GM12878 (cell line): ENCODE measurements at regions of chr1 and their contacts with region 1.

Region 1: DNA sequence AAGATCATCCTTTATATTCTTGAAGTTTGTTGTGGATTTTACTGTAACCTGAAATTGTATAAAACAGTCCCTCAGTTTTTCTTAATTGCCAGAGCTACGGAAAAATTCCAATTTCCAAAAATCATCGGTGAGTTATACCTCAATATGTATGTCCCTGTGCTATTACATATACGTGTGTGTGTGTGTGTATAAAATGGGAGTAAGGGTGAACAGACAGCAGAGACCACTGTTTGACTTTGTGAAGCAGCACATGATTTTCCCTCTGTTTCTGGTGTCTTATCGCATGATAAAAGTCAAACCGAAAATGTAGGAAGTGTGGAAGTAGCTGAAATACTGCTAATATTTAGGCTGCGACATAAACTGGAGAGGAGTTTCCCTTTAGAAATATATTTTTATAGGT is 1.2 kb downstream of the OR2T1 start:
- DNase-seq: peak; percentile 76
- ATAC-seq: no peak
- H3K4me3 ChIP-seq: no peak overlapping the region
- H3K27ac ChIP-seq: no peak overlapping the region
- H3K4me1 ChIP-seq: peaks cover 8% of the 10 kb centered on the region
- H3K27me3 ChIP-seq: no peaks in the 10 kb centered on the region
- CTCF ChIP-seq: peak; percentile 5 to 39 (median 22); a peak in 5 of 6 replicates
- EP300 ChIP-seq: no peak
- POLR2A ChIP-seq: no peak
- RAD21 ChIP-seq: peak; percentile 51

Region 2: DNA sequence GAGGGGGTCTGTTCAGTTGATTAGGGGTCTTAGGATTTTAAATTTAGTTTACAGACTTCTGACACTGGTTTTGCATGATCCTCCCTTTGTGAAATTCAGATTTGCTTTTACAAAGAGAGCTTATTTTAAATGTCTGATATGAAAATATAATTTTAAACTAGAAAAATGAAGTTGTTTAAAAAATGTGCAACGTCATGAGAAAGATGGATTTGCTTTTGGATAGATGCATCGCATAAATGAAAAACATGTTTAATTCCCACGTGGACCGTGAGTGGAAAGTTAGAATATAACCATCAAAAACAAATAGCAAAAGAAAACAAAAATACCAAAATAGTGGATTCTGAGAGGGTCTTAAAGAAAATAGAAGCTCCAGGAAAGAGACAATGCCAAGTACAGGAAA is 67.1 kb after region 1 on chr1:
- CTCF ChIA-PET with region 1: interaction called, 4 read pairs
- POLR2A ChIA-PET with region 1: no interaction called
- RAD21 ChIA-PET with region 1: interaction called, 3 read pairs
- SMC1A ChIA-PET with region 1: interaction called, 5 read pairs
- in situ Hi-C with region 1: no loop called
- intact Hi-C with region 1: loop called (anchors 5 kb)
- DNase-seq: no peak
- ATAC-seq: no peak
- H3K4me3 ChIP-seq: no peak overlapping the region
- H3K27ac ChIP-seq: no peak overlapping the region
- H3K4me1 ChIP-seq: 0 out of 2 replicates have a peak, but pooled peaks cover 4% of the 10 kb centered on the region
- H3K27me3 ChIP-seq: no peaks in the 10 kb centered on the region
- CTCF ChIP-seq: no peak
- EP300 ChIP-seq: no peak
- POLR2A ChIP-seq: no peak
- RAD21 ChIP-seq: no peak

Region 3: GRCh38 chr1:248686815-248687214 is 282.8 kb after region 1 on chr1:
- CTCF ChIA-PET with region 1: interaction called, 24 read pairs
- POLR2A ChIA-PET with region 1: no interaction called
- RAD21 ChIA-PET with region 1: interaction called, 33 read pairs
- SMC1A ChIA-PET with region 1: interaction called, 26 read pairs
- in situ Hi-C with region 1: no loop called
- intact Hi-C with region 1: loop called (anchors 1 kb)
- DNase-seq: peak; percentile 43
- ATAC-seq: peak; percentile 78
- H3K4me3 ChIP-seq: no peak overlapping the region
- H3K27ac ChIP-seq: no peak overlapping the region; the same call in 1 of the 2 replicates
- H3K4me1 ChIP-seq: peaks cover 3% of the 10 kb centered on the region; the same call in 1 of the 2 replicates
- H3K27me3 ChIP-seq: no peaks in the 10 kb centered on the region
- CTCF ChIP-seq: peak; percentile 45 to 70 (median 70); a peak in 5 of 6 replicates
- EP300 ChIP-seq: no peak
- POLR2A ChIP-seq: no peak
- RAD21 ChIP-seq: peak; percentile 95